Head of caudate nucleus (tissue), 42 donors: ENCODE measurements at regions of chr15 and their contacts with region 1.

Region 1: GRCh38 chr15:90362936-90363212 is 10.8 kb downstream of the ZNF774 start:
- DNase-seq: peak in 10 of 42 donors; percentile 11 to 63 (median 32)

Region 2: GRCh38 chr15:90482124-90483011 is 119.5 kb after region 1 on chr15:
- intact Hi-C with region 1: loop called (anchors 5 kb)
- DNase-seq: peak in 39 of 42 donors; percentile 45 to 91 (median 76)